ENCODE measurements at regions of chr6 and their contacts with region 1.

Region 1: DNA sequence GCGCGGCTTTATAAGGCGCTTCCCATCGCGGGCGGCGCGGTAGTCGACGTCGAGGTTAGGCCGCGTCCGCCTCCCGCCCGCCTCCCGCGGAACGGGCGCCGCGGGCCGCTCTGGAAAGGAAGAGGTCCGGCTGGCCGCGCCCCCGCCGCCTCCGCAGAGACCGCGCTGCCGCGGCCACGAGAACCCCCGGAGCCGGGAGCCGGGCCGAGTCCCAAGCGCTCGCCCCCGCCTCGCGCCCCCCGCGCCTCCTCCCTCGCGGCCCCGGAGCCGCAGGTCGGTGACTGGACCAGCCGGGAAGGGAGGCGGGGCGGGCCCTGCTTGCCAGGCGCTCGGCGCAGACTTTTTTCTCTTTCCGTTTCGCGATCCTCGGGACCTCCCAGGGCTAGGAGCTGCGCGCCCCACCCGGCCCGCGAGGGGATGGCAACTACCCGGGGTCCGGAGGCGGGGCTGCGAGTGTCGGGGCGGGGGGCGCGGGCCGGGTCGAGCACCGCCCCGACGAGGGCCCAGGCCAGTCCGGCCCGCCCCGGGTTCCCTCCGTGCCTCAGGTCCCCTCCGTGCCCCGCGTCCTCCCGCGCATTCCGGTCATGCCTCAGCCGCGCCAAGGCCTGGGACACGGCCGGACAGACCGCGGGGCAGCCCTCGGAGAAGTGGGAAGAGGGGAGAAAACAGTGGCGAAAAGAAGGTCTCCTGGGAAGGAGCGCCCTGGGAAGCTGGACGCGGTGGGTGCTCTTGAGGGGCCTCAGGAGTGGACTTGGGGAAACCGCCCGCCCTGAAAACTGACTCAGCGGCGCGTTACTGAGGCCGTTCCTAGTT is 423 bp upstream of the PXDC1 start:
- DNase-seq: peak; percentile 86 to 91
- H3K4me3 ChIP-seq: peak overlapping the region; percentile 89 to 99 (median 95)
- H3K27ac ChIP-seq: peak overlapping the region; percentile 98 to 99
- H3K4me1 ChIP-seq: peaks cover 0 to 7% of the 10 kb centered on the region in 2 donors
- H3K27me3 ChIP-seq: no peaks in the 10 kb centered on the region
- CTCF ChIP-seq: peak in 2 of 3 donors; percentile 42 to 50
- POLR2A ChIP-seq: peak; percentile 7

Region 2: DNA sequence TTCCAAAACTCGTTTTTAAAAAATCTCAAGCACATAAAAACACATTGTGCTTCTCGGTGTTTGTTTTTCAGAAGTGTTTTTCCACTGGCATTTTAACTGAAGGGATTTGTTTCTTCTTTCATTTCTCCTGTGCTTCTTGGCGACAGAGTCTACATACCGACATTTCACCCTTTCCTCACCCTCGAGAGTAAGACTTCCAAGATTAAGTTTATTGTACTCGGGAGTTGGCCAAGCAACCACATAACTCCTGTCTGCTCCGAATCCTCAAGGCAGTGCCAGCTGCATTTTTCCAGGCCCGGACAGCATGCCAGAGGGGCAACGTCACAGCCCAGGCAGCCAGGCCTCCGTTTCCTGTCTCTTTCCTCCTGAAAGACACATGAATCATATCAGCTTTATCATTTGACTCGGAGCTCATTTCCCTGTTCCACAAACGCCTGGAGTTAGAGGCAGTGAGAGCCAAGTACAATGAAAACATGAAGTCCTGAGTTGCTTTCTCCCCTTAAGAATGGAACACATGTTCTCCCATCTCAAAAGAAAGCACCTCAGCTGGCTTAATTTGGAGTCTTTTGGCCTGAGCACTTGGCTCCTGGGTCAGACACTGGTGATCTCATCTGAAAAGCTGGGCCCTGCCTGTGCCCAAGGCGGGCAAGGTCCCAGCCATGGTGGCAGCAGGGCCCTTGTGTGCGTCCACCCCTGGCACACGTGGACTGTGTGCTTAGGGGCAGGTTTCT is 74.1 kb after region 1 on chr6:
- intact Hi-C with region 1: loop called (anchors 1 kb)
- DNase-seq: peak; percentile 89 to 97
- H3K4me3 ChIP-seq: peak overlapping the region; percentile 17 to 34 (median 30)
- H3K27ac ChIP-seq: peak overlapping the region; percentile 95 to 96
- H3K4me1 ChIP-seq: peaks cover 6 to 18% of the 10 kb centered on the region in 2 donors
- H3K27me3 ChIP-seq: no peaks in the 10 kb centered on the region
- CTCF ChIP-seq: no peak
- POLR2A ChIP-seq: no peak

Region 3: GRCh38 chr6:3929281-3929798 is 177.4 kb after region 1 on chr6:
- intact Hi-C with region 1: loop called (anchors 5 kb)
- DNase-seq: no peak
- H3K4me3 ChIP-seq: no peak overlapping the region
- H3K27ac ChIP-seq: peak overlapping the region in 1 of 2 donors; percentile 23
- H3K4me1 ChIP-seq: no peaks in the 10 kb centered on the region
- H3K27me3 ChIP-seq: no peaks in the 10 kb centered on the region
- CTCF ChIP-seq: no peak
- POLR2A ChIP-seq: no peak